Sigmoid colon (tissue), 7 donors: ENCODE measurements at regions of chr1 and their contacts with region 1.

Region 1: DNA sequence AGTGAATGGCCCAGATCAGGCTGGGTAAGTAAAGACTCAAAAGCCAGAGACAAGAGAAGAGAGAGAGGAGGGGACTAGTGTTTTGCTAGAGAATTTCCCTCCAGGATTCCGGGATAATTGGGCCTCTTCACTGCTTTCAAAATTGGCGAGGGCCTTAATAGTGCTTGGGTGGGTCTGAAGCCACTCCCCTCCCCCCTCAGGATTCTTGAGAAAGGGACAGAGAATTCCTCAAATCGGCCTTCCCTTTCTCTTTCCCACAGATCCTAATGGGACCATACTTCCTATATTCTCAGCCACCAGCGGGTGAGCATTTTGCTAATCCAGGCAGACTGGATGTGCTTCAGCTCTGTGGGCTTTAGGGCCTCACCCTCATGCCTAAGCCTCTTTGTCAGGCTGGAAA is 11.9 kb downstream of the SFN start:
- DNase-seq: no peak
- H3K4me3 ChIP-seq: no peak overlapping the region
- H3K27ac ChIP-seq: no peak overlapping the region
- H3K4me1 ChIP-seq: peaks cover 0 to 4% (median 0%) of the 10 kb centered on the region in 4 donors
- H3K27me3 ChIP-seq: no peaks in the 10 kb centered on the region
- CTCF ChIP-seq: no peak
- EP300 ChIP-seq: no peak
- POLR2A ChIP-seq: no peak

Region 2: GRCh38 chr1:26811057-26811456 is 63.8 kb before region 1 on chr1:
- intact Hi-C with region 1: loop called (anchors 2 kb)
- DNase-seq: no peak
- H3K4me3 ChIP-seq: no peak overlapping the region
- H3K27ac ChIP-seq: no peak overlapping the region
- H3K4me1 ChIP-seq: peaks cover 0 to 3% (median 0%) of the 10 kb centered on the region in 4 donors
- H3K27me3 ChIP-seq: no peaks in the 10 kb centered on the region
- CTCF ChIP-seq: no peak
- EP300 ChIP-seq: no peak
- POLR2A ChIP-seq: no peak

Region 3: DNA sequence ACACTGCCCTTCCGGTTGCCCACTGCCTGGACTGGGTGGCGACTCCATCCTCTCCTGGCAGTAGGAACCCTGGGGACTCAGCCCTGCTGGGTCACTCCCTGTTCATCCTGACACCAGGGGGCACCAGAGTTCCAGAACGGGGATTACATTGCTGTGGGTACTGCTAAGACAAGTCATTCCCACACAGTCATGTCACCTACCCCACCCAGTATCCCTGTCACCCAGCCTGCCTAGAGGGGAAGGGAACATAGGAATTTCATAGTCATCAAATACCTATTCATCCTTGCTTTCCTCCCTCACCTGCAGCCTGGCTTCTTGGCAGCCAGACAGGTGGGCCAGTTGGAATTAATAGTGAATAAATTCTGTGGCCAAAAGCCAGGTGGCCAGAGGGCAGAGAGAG is 21.7 kb before region 1 on chr1:
- intact Hi-C with region 1: loop called (anchors 1 kb)
- DNase-seq: peak; percentile 90
- H3K4me3 ChIP-seq: no peak overlapping the region
- H3K27ac ChIP-seq: no peak overlapping the region
- H3K4me1 ChIP-seq: peaks cover 0 to 27% (median 19%) of the 10 kb centered on the region in 4 donors
- H3K27me3 ChIP-seq: no peaks in the 10 kb centered on the region
- CTCF ChIP-seq: peak; percentile 66 to 86 (median 78)
- EP300 ChIP-seq: no peak
- POLR2A ChIP-seq: no peak

Region 4: DNA sequence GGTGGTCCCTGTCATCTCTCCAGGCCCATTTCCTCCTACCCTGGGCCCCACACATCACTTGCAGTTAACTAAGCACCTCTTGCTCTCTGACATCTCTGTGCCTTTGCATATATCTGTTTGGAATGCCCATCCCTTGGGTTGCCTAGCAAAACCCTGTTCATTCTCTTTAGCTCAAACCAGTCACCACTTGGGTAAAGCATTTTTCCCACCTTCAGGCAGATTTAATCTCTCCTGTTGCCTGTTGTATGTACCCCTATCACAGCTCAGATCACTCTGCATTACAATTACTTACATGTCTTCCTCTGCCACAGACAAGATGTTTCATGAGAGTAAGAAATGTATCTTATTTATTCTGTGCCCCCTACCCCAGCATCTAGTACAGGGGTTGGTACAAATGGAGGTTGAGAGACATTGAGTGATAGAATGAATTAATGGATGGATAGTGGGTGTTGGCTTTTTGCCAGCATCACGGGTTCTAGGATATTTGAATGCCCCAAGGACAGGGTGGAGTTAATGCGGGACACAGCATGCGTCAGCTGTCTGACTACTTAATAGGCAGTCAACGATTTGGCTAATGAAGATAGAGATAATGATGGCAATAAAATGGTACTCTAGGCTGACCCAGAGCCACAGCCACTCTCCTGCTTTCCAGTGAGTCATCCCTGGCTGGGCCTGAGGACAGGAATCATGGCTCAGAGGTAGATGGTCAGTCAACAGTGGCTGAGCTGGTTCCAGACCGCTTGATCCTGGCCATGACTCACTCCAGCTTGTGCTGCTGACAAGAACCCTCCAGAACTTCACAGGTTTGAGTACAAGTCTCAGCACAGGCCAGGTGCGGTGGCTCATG is 32.4 kb after region 1 on chr1:
- intact Hi-C with region 1: no loop called
- DNase-seq: no peak
- H3K4me3 ChIP-seq: no peak overlapping the region
- H3K27ac ChIP-seq: no peak overlapping the region
- H3K4me1 ChIP-seq: no peaks in the 10 kb centered on the region
- H3K27me3 ChIP-seq: no peaks in the 10 kb centered on the region
- CTCF ChIP-seq: no peak
- EP300 ChIP-seq: no peak
- POLR2A ChIP-seq: no peak